Mammary epithelial cell (primary cell): ENCODE measurements at regions of chr18 and their contacts with region 1.

Region 1: GRCh38 chr18:52237551-52237950 is 102.4 kb upstream of the DCC start:
- DNase-seq: peak; percentile 98
- H3K4me3 ChIP-seq: no peak overlapping the region
- H3K27ac ChIP-seq: peak overlapping the region; percentile 94
- H3K4me1 ChIP-seq: peaks cover 31% of the 10 kb centered on the region
- H3K27me3 ChIP-seq: no peaks in the 10 kb centered on the region
- CTCF ChIP-seq: no peak

Region 2: GRCh38 chr18:51522821-51523220 is 714.7 kb before region 1 on chr18:
- CTCF ChIA-PET with region 1: no interaction called
- dilution Hi-C with region 1: no loop called
- in situ Hi-C with region 1: no loop called
- intact Hi-C with region 1: loop called (anchors 10 kb)
- DNase-seq: peak; percentile 87
- H3K4me3 ChIP-seq: no peak overlapping the region
- H3K27ac ChIP-seq: peak overlapping the region; percentile 76
- H3K4me1 ChIP-seq: peaks cover 80% of the 10 kb centered on the region
- H3K27me3 ChIP-seq: no peaks in the 10 kb centered on the region
- CTCF ChIP-seq: no peak

Region 3: GRCh38 chr18:52160652-52161051 is 76.9 kb before region 1 on chr18:
- CTCF ChIA-PET with region 1: no interaction called
- dilution Hi-C with region 1: no loop called
- in situ Hi-C with region 1: no loop called
- intact Hi-C with region 1: loop called (anchors 1 kb)
- DNase-seq: peak; percentile 94
- H3K4me3 ChIP-seq: no peak overlapping the region
- H3K27ac ChIP-seq: peak overlapping the region; percentile 82
- H3K4me1 ChIP-seq: peaks cover 21% of the 10 kb centered on the region
- H3K27me3 ChIP-seq: no peaks in the 10 kb centered on the region
- CTCF ChIP-seq: no peak

Region 4: DNA sequence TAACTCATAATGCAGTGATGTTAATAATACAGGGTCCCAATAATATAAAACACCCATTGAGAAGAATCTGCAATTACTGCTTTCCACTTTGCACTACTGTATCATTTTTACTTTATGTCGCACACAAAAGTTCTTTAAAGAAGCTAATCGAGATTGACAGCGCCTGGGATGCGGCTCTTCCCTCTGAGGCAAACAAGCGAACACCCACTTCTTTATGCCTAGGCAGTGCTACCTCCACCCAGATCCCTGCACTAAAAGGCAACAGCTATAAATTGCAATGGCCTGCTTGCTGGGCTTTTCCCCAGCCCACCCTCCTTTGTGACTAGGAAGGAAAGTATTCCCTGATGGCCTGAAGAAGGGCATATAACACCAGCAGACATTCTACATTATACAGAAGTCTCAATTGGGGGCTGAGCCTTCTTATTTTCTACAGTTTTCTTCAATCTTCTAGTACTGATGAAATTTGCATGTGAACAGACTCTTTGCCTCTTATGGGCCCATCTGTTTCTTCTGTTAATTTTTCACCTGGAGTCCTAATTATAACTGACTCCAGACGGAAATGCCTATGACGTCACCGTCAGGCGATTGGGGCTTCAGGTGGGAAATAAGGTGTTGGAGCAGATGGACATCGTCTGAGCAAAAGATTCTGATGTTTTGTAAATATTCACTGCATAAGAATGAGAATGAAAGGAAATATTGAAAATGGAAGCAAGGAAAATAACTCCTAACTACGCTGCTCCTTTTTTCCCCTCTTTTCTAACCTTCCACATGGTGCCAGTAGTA is 36.5 kb before region 1 on chr18:
- CTCF ChIA-PET with region 1: no interaction called
- dilution Hi-C with region 1: no loop called
- in situ Hi-C with region 1: no loop called
- intact Hi-C with region 1: no loop called
- DNase-seq: no peak
- H3K4me3 ChIP-seq: no peak overlapping the region
- H3K27ac ChIP-seq: no peak overlapping the region
- H3K4me1 ChIP-seq: peaks cover 8% of the 10 kb centered on the region
- H3K27me3 ChIP-seq: no peaks in the 10 kb centered on the region
- CTCF ChIP-seq: no peak

Region 5: GRCh38 chr18:52254367-52254766 is 16.8 kb after region 1 on chr18:
- CTCF ChIA-PET with region 1: no interaction called
- dilution Hi-C with region 1: no loop called
- in situ Hi-C with region 1: no loop called
- intact Hi-C with region 1: loop called (anchors 1 kb)
- DNase-seq: peak; percentile 71
- H3K4me3 ChIP-seq: no peak overlapping the region
- H3K27ac ChIP-seq: peak overlapping the region; percentile 37
- H3K4me1 ChIP-seq: peaks cover 15% of the 10 kb centered on the region
- H3K27me3 ChIP-seq: no peaks in the 10 kb centered on the region
- CTCF ChIP-seq: no peak